PC-9 (cell line): ENCODE measurements at regions of chr3 and their contacts with region 1.

Region 1: GRCh38 chr3:111803123-111803593 is 55.9 kb upstream of the PHLDB2 start:
- DNase-seq: peak; percentile 89 to 98
- H3K4me3 ChIP-seq: no peak overlapping the region
- H3K27ac ChIP-seq: peak overlapping the region; percentile 95
- H3K4me1 ChIP-seq: peaks cover 43% of the 10 kb centered on the region
- H3K27me3 ChIP-seq: no peaks in the 10 kb centered on the region
- CTCF ChIP-seq: no peak

Region 2: DNA sequence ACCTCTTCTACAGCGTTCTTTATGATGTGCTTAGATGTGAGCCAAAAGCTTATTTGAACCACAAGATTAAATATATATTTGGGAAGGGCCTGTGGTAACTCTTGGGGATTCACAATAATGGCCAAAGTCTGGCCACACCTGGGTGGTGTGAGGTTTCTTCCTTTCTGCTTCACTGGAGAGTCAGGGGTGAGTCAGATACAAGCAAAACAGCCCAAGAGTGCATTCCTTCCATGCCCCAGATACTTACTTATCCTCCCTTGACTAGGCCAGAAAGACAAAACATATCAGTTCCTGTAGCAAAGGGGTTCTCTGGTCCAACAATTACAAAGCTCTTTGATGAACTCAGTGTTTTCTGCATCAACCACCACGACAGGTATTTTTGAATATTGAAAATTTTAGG is 209.0 kb before region 1 on chr3:
- CTCF ChIA-PET with region 1: no interaction called
- POLR2A ChIA-PET with region 1: interaction called, 30 read pairs
- intact Hi-C with region 1: no loop called
- DNase-seq: peak; percentile 74 to 92
- H3K4me3 ChIP-seq: no peak overlapping the region
- H3K27ac ChIP-seq: peak overlapping the region; percentile 57
- H3K4me1 ChIP-seq: peaks cover 28% of the 10 kb centered on the region
- H3K27me3 ChIP-seq: no peaks in the 10 kb centered on the region
- CTCF ChIP-seq: no peak

Region 3: DNA sequence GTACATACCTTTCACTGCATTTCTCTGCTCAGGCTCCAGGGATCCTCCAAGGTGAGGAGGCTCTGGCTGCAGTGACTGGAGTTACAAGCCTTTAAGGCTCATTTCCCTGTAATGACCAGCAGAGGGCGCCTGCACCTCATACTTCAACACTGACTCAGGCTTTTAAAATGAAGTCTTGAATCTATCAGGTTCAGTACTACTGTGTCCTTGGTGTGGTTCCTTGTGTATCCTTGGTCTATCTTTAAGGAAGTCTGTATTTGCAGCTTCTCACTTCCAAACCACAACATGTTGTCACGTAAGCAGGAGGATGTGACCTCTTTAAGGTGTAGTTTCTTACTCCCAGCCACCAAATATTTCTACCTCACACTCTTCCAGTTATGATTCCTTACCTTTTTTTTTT is 85.6 kb before region 1 on chr3:
- CTCF ChIA-PET with region 1: no interaction called
- POLR2A ChIA-PET with region 1: interaction called, 3 read pairs
- intact Hi-C with region 1: loop called (anchors 1 kb)
- DNase-seq: peak; percentile 84 to 98
- H3K4me3 ChIP-seq: no peak overlapping the region
- H3K27ac ChIP-seq: peak overlapping the region; percentile 34
- H3K4me1 ChIP-seq: peaks cover 25% of the 10 kb centered on the region
- H3K27me3 ChIP-seq: no peaks in the 10 kb centered on the region
- CTCF ChIP-seq: peak; percentile 100

Region 4: DNA sequence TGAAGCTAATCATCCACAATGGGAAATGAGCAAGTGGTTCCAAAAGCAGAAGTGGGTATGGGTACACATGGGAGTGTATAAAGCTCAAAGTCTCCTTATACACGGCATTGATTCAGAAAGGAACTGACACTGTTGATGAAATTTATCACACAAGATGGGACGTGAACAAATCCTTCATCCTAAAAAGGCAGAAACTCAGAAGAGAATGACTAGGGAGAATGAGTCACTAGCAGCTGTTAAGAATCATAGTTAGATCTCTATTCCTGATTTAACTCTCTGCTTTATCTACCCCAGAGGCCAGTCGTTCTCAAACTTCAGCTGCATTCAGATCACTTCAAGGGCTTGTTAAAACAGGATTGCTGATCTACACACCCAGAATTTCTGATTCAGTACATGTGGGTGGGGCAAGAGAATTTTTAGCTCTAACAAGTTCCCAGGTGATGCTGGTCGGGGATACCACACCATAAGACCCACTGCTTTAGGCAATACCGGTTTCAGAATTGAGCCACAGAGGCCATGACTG is 41.8 kb before region 1 on chr3:
- CTCF ChIA-PET with region 1: no interaction called
- POLR2A ChIA-PET with region 1: interaction called, 3 read pairs
- intact Hi-C with region 1: loop called (anchors 2 kb)
- DNase-seq: peak; percentile 47 to 73
- H3K4me3 ChIP-seq: no peak overlapping the region
- H3K27ac ChIP-seq: peak overlapping the region; percentile 32
- H3K4me1 ChIP-seq: peaks cover 10% of the 10 kb centered on the region
- H3K27me3 ChIP-seq: no peaks in the 10 kb centered on the region
- CTCF ChIP-seq: no peak

Region 5: GRCh38 chr3:111851511-111851954 is 48.4 kb after region 1 on chr3:
- CTCF ChIA-PET with region 1: no interaction called
- POLR2A ChIA-PET with region 1: interaction called, 7 read pairs
- intact Hi-C with region 1: loop called (anchors 1 kb)
- DNase-seq: peak; percentile 63 to 98
- H3K4me3 ChIP-seq: no peak overlapping the region
- H3K27ac ChIP-seq: peak overlapping the region; percentile 83
- H3K4me1 ChIP-seq: peaks cover 58% of the 10 kb centered on the region
- H3K27me3 ChIP-seq: no peaks in the 10 kb centered on the region
- CTCF ChIP-seq: no peak

Region 6: GRCh38 chr3:111917300-111917699 is 114.1 kb after region 1 on chr3:
- CTCF ChIA-PET with region 1: no interaction called
- POLR2A ChIA-PET with region 1: interaction called, 3 read pairs
- intact Hi-C with region 1: loop called (anchors 2 kb)
- DNase-seq: peak; percentile 30 to 92
- H3K4me3 ChIP-seq: no peak overlapping the region
- H3K27ac ChIP-seq: peak overlapping the region; percentile 88
- H3K4me1 ChIP-seq: peaks cover 35% of the 10 kb centered on the region
- H3K27me3 ChIP-seq: no peaks in the 10 kb centered on the region
- CTCF ChIP-seq: no peak